ENCODE measurements at regions of chr1 and their contacts with region 1.

Region 1: DNA sequence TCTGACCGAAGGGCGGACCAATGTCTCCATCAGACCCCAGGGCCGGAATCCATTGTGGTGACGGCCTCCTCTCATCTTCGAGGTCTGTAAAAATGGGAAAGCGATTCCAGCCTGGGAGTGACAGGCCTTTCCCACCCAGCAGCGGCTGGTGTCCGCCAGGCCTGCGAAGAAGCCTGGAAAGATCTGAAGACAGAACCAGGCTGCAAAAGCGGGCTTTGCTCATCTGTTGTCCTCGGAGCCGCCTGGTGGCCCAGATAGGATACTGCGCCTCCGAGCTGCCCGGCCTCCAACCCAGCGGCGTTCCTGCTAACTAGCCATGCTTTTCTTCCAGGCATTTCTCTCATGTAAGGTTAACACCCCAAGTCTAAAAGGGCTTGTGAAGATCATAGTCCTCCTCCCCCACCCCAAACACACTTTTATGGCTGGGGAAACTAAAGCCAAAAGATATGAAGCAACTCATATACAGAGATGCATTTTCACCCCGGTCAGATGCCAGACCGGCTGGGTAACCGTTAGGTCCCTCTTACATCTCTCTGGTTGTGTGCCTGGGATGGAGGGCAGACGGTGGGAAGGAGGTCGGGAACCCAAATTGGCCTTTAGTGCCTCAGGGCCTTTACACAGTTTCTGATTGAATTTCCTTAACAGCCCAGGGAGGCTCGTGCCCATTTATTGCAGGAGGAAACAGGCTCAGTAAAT is 1.9 kb upstream of the DHRS3 start:
- DNase-seq: peak; percentile 87
- H3K4me3 Mint-ChIP-seq: peak overlapping the region; percentile 95
- H3K27ac Mint-ChIP-seq: peak overlapping the region; percentile 52
- H3K4me1 Mint-ChIP-seq: peaks cover 36% of the 10 kb centered on the region
- H3K27me3 Mint-ChIP-seq: no peaks in the 10 kb centered on the region

Region 2: GRCh38 chr1:12296623-12297022 is 323.3 kb before region 1 on chr1:
- CTCF ChIA-PET with region 1: interaction called, 13 read pairs
- POLR2A ChIA-PET with region 1: interaction called, 6 read pairs
- intact Hi-C with region 1: loop called (anchors 5 kb)
- DNase-seq: no peak
- H3K4me3 Mint-ChIP-seq: no peak overlapping the region
- H3K27ac Mint-ChIP-seq: no peak overlapping the region
- H3K4me1 Mint-ChIP-seq: peaks cover 24% of the 10 kb centered on the region
- H3K27me3 Mint-ChIP-seq: no peaks in the 10 kb centered on the region

Region 3: GRCh38 chr1:12407050-12407961 is 212.6 kb before region 1 on chr1:
- CTCF ChIA-PET with region 1: interaction called, 16 read pairs
- POLR2A ChIA-PET with region 1: interaction called, 3 read pairs
- intact Hi-C with region 1: loop called (anchors 1 kb)
- DNase-seq: peak; percentile 21
- H3K4me3 Mint-ChIP-seq: no peak overlapping the region
- H3K27ac Mint-ChIP-seq: no peak overlapping the region
- H3K4me1 Mint-ChIP-seq: peaks cover 20% of the 10 kb centered on the region
- H3K27me3 Mint-ChIP-seq: no peaks in the 10 kb centered on the region

Region 4: GRCh38 chr1:12448746-12449177 is 171.2 kb before region 1 on chr1:
- CTCF ChIA-PET with region 1: interaction called, 3 read pairs
- POLR2A ChIA-PET with region 1: interaction called, 5 read pairs
- intact Hi-C with region 1: loop called (anchors 1 kb)
- DNase-seq: no peak
- H3K4me3 Mint-ChIP-seq: no peak overlapping the region
- H3K27ac Mint-ChIP-seq: peak overlapping the region; percentile 88
- H3K4me1 Mint-ChIP-seq: peaks cover 65% of the 10 kb centered on the region
- H3K27me3 Mint-ChIP-seq: peaks cover 11% of the 10 kb centered on the region

Region 5: DNA sequence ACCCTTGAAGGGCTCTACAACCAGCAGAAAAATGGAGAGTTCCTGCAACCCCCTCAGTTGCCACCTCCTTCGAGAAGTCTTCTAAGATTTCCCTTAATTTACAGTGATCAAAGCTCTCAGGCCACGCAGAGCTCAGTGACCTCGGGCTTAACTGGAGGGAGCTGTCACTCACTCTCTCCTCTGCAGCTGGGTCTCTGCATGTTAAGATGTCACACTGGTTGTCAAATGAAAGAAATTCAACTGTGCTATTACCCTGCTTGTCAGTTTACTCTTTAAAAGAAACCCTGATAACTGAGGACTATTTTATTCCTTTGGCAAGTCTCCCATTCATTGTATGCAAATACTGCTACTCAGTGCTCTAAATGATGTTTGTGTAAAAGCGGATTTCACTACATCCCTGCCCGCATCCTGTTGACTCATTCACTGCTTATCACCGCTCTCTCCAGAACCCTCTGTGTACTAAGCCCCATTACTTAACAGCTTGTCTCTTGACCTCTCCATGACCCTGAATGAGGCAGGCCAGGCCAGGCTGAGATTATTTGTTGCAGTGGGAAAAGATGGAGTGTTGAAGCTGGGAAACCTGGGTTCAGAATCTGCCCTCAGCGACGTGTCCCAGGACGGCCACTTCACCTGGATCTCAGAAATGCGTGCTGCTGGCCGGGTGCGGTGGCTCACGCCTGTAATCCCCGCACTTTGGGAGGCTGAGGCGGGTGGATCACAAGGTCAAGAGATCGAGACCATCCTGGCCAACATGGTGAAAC is 15.6 kb before region 1 on chr1:
- CTCF ChIA-PET with region 1: interaction called, 38 read pairs
- POLR2A ChIA-PET with region 1: interaction called, 22 read pairs
- intact Hi-C with region 1: loop called (anchors 1 kb)
- DNase-seq: peak; percentile 86
- H3K4me3 Mint-ChIP-seq: peak overlapping the region; percentile 39
- H3K27ac Mint-ChIP-seq: peak overlapping the region; percentile 66
- H3K4me1 Mint-ChIP-seq: peaks cover 58% of the 10 kb centered on the region
- H3K27me3 Mint-ChIP-seq: no peaks in the 10 kb centered on the region